AG04450 (cell line): ENCODE measurements at regions of chr15 and their contacts with region 1.

Region 1: GRCh38 chr15:99409097-99409473 is 156.7 kb upstream of the MEF2A start:
- DNase-seq: no peak
- H3K4me3 ChIP-seq: no peak overlapping the region
- H3K27ac ChIP-seq: no peak overlapping the region
- H3K27me3 ChIP-seq: no peaks in the 10 kb centered on the region
- CTCF ChIP-seq: peak; percentile 72

Region 2: GRCh38 chr15:99371180-99372103 is 37.6 kb before region 1 on chr15:
- CTCF ChIA-PET with region 1: no interaction called
- POLR2A ChIA-PET with region 1: no interaction called
- DNase-seq: no peak
- H3K4me3 ChIP-seq: no peak overlapping the region
- H3K27ac ChIP-seq: no peak overlapping the region
- H3K27me3 ChIP-seq: no peaks in the 10 kb centered on the region
- CTCF ChIP-seq: no peak

Region 3: DNA sequence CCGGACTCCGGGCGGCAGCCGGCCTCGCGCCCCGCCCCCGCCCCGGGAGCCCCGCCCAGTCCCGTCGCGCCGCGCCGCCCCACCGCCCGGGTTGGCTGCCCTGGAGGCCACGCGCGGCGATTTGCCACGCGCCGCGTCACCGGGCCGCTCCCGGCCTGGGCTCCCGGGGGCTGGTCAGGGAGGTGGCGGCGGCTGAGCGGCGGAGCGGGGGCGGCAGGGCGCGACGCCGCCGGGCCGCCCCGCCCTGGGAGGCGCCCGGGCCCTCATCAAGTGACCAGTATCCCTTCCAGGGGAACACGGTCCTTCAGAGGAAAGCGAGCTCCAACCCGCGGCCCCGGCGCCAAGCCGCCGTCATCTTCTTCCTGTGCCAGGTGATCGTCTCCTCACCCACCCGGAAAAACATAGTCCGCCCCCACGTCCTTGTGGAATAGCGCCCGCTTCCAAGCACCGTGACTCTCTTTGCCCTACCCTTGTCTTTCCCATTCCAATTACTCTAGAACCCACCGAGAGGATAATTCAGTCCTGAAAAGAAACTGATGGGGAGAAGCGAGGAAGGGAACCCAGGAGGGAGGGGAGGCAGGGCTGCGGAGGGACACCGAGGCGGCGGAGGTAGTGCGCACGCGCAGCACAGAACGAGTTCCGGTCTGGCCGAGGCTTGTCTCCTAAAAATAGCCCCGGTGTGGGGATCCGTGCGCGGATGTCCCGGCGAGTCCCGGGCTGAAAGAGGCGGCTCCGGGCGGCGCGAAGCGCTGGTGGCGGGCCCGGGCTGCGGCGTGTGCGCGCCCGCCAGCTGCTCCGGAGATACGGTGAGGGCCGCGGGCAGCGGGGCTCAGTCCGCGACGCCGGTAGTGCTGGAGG is 156.4 kb after region 1 on chr15 and contains the start of gene MEF2A:
- CTCF ChIA-PET with region 1: interaction called, 10 read pairs
- POLR2A ChIA-PET with region 1: no interaction called
- DNase-seq: peak; percentile 89
- H3K4me3 ChIP-seq: peak within 1 kb of the TSS; percentile 88
- H3K27ac ChIP-seq: peak within 1 kb of the TSS; percentile 77
- H3K27me3 ChIP-seq: peaks cover 4% of the 10 kb centered on the region
- CTCF ChIP-seq: no peak
- polyA plus RNA-seq, gene MEF2A: 31.4 and 40.9 TPM in 2 replicates